ENCODE measurements at regions of chr11 and their contacts with region 1.

Region 1: GRCh38 chr11:64846998-64847666 is 2.7 kb upstream of the CDC42BPG start:
- DNase-seq: peak; percentile 76
- ATAC-seq: peak; percentile 83
- H3K4me3 ChIP-seq: no peak overlapping the region
- H3K27ac ChIP-seq: peak overlapping the region; percentile 81
- H3K4me1 ChIP-seq: peaks cover 63% of the 10 kb centered on the region
- H3K27me3 ChIP-seq: no peaks in the 10 kb centered on the region
- CTCF ChIP-seq: peak; percentile 99

Region 2: GRCh38 chr11:64887757-64888405 is 40.7 kb after region 1 on chr11:
- CTCF ChIA-PET with region 1: interaction called, 16 read pairs
- POLR2A ChIA-PET with region 1: interaction called, 4 read pairs
- in situ Hi-C with region 1: no loop called
- intact Hi-C with region 1: no loop called
- DNase-seq: no peak
- ATAC-seq: peak; percentile 92
- H3K4me3 ChIP-seq: peak overlapping the region; percentile 37 to 56
- H3K27ac ChIP-seq: peak overlapping the region; percentile 85
- H3K4me1 ChIP-seq: peaks cover 19% of the 10 kb centered on the region
- H3K27me3 ChIP-seq: no peaks in the 10 kb centered on the region
- CTCF ChIP-seq: peak; percentile 100

Region 3: GRCh38 chr11:64894070-64894796 is 47.1 kb after region 1 on chr11:
- CTCF ChIA-PET with region 1: interaction called, 5 read pairs
- POLR2A ChIA-PET with region 1: interaction called, 3 read pairs
- in situ Hi-C with region 1: no loop called
- intact Hi-C with region 1: loop called (anchors 2 kb)
- DNase-seq: no peak
- ATAC-seq: peak; percentile 88
- H3K4me3 ChIP-seq: no peak overlapping the region
- H3K27ac ChIP-seq: no peak overlapping the region
- H3K4me1 ChIP-seq: peaks cover 12% of the 10 kb centered on the region
- H3K27me3 ChIP-seq: no peaks in the 10 kb centered on the region
- CTCF ChIP-seq: peak; percentile 99

Region 4: DNA sequence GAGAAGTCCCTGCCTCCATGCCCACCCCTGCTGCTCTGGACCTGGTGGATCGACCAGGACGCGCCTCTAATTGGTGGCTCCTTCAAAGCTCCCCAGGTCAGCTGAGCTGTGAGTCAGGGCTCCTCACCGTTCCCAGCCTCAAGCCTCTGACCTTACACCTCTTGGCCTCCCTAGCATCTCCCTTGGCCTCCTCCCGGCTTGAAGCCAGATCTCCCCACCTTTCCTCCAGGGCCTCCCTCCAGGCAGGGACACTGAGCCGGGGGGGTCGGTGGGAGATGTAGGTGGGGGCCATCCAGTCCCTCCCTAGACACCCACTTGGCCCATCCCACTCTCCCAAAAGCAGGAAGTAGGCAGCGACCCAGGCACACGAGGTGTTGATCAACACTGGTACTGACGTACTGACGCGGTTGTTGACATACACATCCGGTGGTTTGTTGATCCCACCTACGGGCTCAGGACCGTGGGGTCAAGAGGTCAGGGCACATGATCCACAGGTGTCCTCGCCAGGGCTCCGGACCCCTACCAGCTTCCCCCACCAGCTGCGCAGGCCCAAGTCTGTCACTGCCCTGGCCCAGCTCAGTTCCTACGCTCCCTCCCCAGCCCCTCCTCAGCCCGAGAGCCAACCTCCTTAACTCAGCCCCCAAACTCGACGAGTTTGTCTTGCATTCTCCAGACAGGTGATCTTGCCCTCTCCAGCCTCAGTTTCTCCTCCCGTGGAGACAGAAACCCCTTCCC is 69.1 kb after region 1 on chr11:
- CTCF ChIA-PET with region 1: interaction called, 10 read pairs
- POLR2A ChIA-PET with region 1: interaction called, 6 read pairs
- in situ Hi-C with region 1: no loop called
- intact Hi-C with region 1: no loop called
- DNase-seq: peak; percentile 51
- ATAC-seq: peak; percentile 29; the same call in 1 of the 2 replicates
- H3K4me3 ChIP-seq: peak overlapping the region; percentile 90 to 97
- H3K27ac ChIP-seq: peak overlapping the region; percentile 87
- H3K4me1 ChIP-seq: peaks cover 19% of the 10 kb centered on the region
- H3K27me3 ChIP-seq: no peaks in the 10 kb centered on the region
- CTCF ChIP-seq: no peak

Region 5: DNA sequence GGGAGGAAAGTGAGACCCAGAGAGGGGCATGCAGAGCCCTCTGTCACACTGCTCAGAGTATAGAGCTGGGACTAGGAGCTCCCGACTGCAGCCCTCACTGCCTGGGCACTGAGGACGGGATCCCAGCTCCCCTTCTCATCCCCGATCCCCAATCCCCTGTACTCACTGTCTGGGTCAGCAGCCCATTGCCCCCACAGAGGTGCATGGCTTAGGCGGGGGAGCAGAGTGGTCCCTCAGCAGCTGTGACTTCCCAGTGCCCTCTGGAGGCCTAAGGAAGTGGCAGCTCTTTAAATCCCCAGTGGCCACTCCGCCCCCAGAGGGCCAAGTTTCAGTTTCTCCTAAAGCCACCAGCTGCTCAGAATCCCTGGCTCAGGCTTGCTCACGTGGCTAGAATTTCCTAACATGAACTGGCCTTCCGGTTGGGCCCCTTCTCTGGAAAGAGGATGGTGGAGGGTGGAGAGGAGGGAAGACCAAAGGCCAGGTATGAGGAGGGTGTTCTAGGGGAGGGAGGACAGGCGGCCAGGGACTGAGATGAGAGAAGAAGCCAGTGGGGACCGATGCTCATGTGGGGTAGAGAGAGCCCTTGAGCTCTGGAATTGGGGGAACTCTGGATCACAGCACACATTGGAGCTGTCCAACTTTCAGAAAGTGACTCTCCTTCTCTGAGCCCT is 149.7 kb after region 1 on chr11 and contains the start of gene BATF2:
- CTCF ChIA-PET with region 1: interaction called, 6 read pairs
- POLR2A ChIA-PET with region 1: no interaction called
- in situ Hi-C with region 1: no loop called
- intact Hi-C with region 1: loop called (anchors 5 kb)
- DNase-seq: no peak
- ATAC-seq: peak; percentile 96
- H3K4me3 ChIP-seq: peak within 1 kb of the TSS; percentile 17 to 60
- H3K27ac ChIP-seq: peak within 1 kb of the TSS; percentile 79
- H3K4me1 ChIP-seq: peaks cover 4% of the 10 kb centered on the region; the same call in 1 of the 2 replicates
- H3K27me3 ChIP-seq: no peaks in the 10 kb centered on the region
- CTCF ChIP-seq: peak; percentile 90; the same call in 1 of the 2 replicates
- total RNA-seq, gene BATF2: 1.6 TPM

Region 6: GRCh38 chr11:65027213-65028067 is 180.3 kb after region 1 on chr11 and contains the start of gene SNX15:
- CTCF ChIA-PET with region 1: no interaction called
- POLR2A ChIA-PET with region 1: interaction called, 3 read pairs
- in situ Hi-C with region 1: no loop called
- intact Hi-C with region 1: loop called (anchors 10 kb)
- DNase-seq: peak; percentile 90
- ATAC-seq: peak; percentile 99
- H3K4me3 ChIP-seq: peak within 1 kb of the TSS; percentile 56 to 60
- H3K27ac ChIP-seq: peak within 1 kb of the TSS; percentile 91
- H3K4me1 ChIP-seq: peaks cover 3% of the 10 kb centered on the region
- H3K27me3 ChIP-seq: no peaks in the 10 kb centered on the region
- CTCF ChIP-seq: no peak
- total RNA-seq, gene SNX15: 51.5 TPM

Region 7: GRCh38 chr11:65117216-65118096 is 270.3 kb after region 1 on chr11 and contains the start of gene ZNHIT2:
- CTCF ChIA-PET with region 1: interaction called, 4 read pairs
- POLR2A ChIA-PET with region 1: no interaction called
- in situ Hi-C with region 1: no loop called
- intact Hi-C with region 1: loop called (anchors 10 kb)
- DNase-seq: peak; percentile 99
- ATAC-seq: peak; percentile 77
- H3K4me3 ChIP-seq: peak within 1 kb of the TSS; percentile 70 to 78
- H3K27ac ChIP-seq: peak within 1 kb of the TSS; percentile 89
- H3K4me1 ChIP-seq: peaks cover 33% of the 10 kb centered on the region
- H3K27me3 ChIP-seq: no peaks in the 10 kb centered on the region
- CTCF ChIP-seq: peak; percentile 99
- total RNA-seq, gene ZNHIT2: 27.1 TPM

Region 8: GRCh38 chr11:65170058-65170534 is 323.0 kb after region 1 on chr11 and contains the start of gene SPDYC:
- CTCF ChIA-PET with region 1: no interaction called
- POLR2A ChIA-PET with region 1: no interaction called
- in situ Hi-C with region 1: no loop called
- intact Hi-C with region 1: no loop called
- DNase-seq: no peak
- ATAC-seq: peak; percentile 51
- H3K4me3 ChIP-seq: no peak within 1 kb of the TSS
- H3K27ac ChIP-seq: peak within 1 kb of the TSS; percentile 13; the same call in 1 of the 2 replicates
- H3K4me1 ChIP-seq: 0 out of 2 replicates have a peak, but pooled peaks cover 10% of the 10 kb centered on the region
- H3K27me3 ChIP-seq: no peaks in the 10 kb centered on the region
- CTCF ChIP-seq: no peak
- total RNA-seq, gene SPDYC: not detected